ENCODE measurements at regions of chr15 and their contacts with region 1.

Region 1: GRCh38 chr15:90143166-90143655 is 40.9 kb upstream of the IDH2 start:
- DNase-seq: peak; percentile 74
- ATAC-seq: peak; percentile 95
- H3K4me3 ChIP-seq: no peak overlapping the region
- H3K4me3 Mint-ChIP-seq: no peak overlapping the region
- H3K27ac ChIP-seq: no peak overlapping the region
- H3K27ac Mint-ChIP-seq: no peak overlapping the region
- H3K4me1 ChIP-seq: peaks cover 0 to 6% of the 10 kb centered on the region in 2 donors
- H3K4me1 Mint-ChIP-seq: peaks cover 3% of the 10 kb centered on the region
- H3K27me3 ChIP-seq: no peaks in the 10 kb centered on the region
- H3K27me3 Mint-ChIP-seq: peaks cover 8% of the 10 kb centered on the region
- CTCF ChIP-seq: peak; percentile 84

Region 2: GRCh38 chr15:89971592-89971997 is 171.6 kb before region 1 on chr15:
- CTCF ChIA-PET with region 1: no interaction called
- POLR2A ChIA-PET with region 1: no interaction called
- intact Hi-C with region 1: no loop called
- DNase-seq: peak; percentile 43
- ATAC-seq: peak; percentile 61
- H3K4me3 ChIP-seq: no peak overlapping the region
- H3K4me3 Mint-ChIP-seq: no peak overlapping the region
- H3K27ac ChIP-seq: no peak overlapping the region
- H3K27ac Mint-ChIP-seq: no peak overlapping the region
- H3K4me1 ChIP-seq: peaks cover 36 to 44% of the 10 kb centered on the region in 2 donors
- H3K4me1 Mint-ChIP-seq: peaks cover 39% of the 10 kb centered on the region
- H3K27me3 ChIP-seq: no peaks in the 10 kb centered on the region
- H3K27me3 Mint-ChIP-seq: no peaks in the 10 kb centered on the region
- CTCF ChIP-seq: no peak

Region 3: DNA sequence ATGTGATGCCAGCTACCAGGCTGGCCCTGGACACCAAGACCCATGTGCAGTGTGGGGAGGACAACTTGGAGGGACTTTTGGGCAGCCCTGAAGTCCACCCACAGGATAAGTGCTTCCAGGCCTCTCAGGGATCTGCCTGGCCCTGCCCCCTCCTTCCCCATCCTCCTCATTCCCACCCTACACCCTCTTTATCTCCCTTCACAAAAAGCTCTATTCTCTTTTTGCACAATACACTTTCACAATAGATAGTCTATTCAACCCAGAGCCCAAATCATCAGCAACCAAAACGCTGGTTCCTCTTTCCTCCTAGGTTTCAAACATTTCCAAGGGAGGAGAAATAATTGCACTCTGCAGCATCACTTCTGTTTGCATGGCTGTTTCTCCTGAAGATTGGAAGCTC is 149.9 kb before region 1 on chr15:
- CTCF ChIA-PET with region 1: no interaction called
- POLR2A ChIA-PET with region 1: no interaction called
- intact Hi-C with region 1: no loop called
- DNase-seq: no peak
- ATAC-seq: no peak
- H3K4me3 ChIP-seq: no peak overlapping the region
- H3K4me3 Mint-ChIP-seq: no peak overlapping the region
- H3K27ac ChIP-seq: no peak overlapping the region
- H3K27ac Mint-ChIP-seq: no peak overlapping the region
- H3K4me1 ChIP-seq: no peaks in the 10 kb centered on the region
- H3K4me1 Mint-ChIP-seq: peaks cover 7% of the 10 kb centered on the region
- H3K27me3 ChIP-seq: no peaks in the 10 kb centered on the region
- H3K27me3 Mint-ChIP-seq: no peaks in the 10 kb centered on the region
- CTCF ChIP-seq: no peak

Region 4: GRCh38 chr15:90059208-90059985 is 83.8 kb before region 1 on chr15:
- CTCF ChIA-PET with region 1: no interaction called
- POLR2A ChIA-PET with region 1: no interaction called
- intact Hi-C with region 1: no loop called
- DNase-seq: peak; percentile 96
- ATAC-seq: peak; percentile 88
- H3K4me3 ChIP-seq: peak overlapping the region in 1 of 5 experiments; percentile 22
- H3K4me3 Mint-ChIP-seq: peak overlapping the region; percentile 80
- H3K27ac ChIP-seq: peak overlapping the region; percentile 82 to 88
- H3K27ac Mint-ChIP-seq: peak overlapping the region; percentile 98
- H3K4me1 ChIP-seq: peaks cover 54 to 93% of the 10 kb centered on the region in 2 donors
- H3K4me1 Mint-ChIP-seq: peaks cover 81% of the 10 kb centered on the region
- H3K27me3 ChIP-seq: no peaks in the 10 kb centered on the region
- H3K27me3 Mint-ChIP-seq: no peaks in the 10 kb centered on the region
- CTCF ChIP-seq: no peak

Region 5: GRCh38 chr15:90101969-90102890 is 41.0 kb before region 1 on chr15 and contains the start of gene IDH2:
- CTCF ChIA-PET with region 1: no interaction called
- POLR2A ChIA-PET with region 1: no interaction called
- intact Hi-C with region 1: loop called (anchors 1 kb)
- DNase-seq: peak; percentile 84
- ATAC-seq: peak; percentile 88
- H3K4me3 ChIP-seq: peak within 1 kb of the TSS; percentile 39 to 76 (median 73)
- H3K4me3 Mint-ChIP-seq: peak within 1 kb of the TSS; percentile 90
- H3K27ac ChIP-seq: peak within 1 kb of the TSS; percentile 53 to 81
- H3K27ac Mint-ChIP-seq: peak within 1 kb of the TSS; percentile 97
- H3K4me1 ChIP-seq: peaks cover 43 to 47% of the 10 kb centered on the region in 2 donors
- H3K4me1 Mint-ChIP-seq: peaks cover 45% of the 10 kb centered on the region
- H3K27me3 ChIP-seq: peaks cover 0 to 5% (median 1%) of the 10 kb centered on the region in 4 experiments
- H3K27me3 Mint-ChIP-seq: peaks cover 6% of the 10 kb centered on the region
- CTCF ChIP-seq: no peak
- total RNA-seq, gene IDH2: 30.7 and 33.3 TPM in 2 replicates

Region 6: GRCh38 chr15:90300988-90301706 is 157.9 kb after region 1 on chr15:
- CTCF ChIA-PET with region 1: interaction called, 22 read pairs
- POLR2A ChIA-PET with region 1: no interaction called
- intact Hi-C with region 1: no loop called
- DNase-seq: peak; percentile 73
- ATAC-seq: peak; percentile 36
- H3K4me3 ChIP-seq: no peak overlapping the region
- H3K4me3 Mint-ChIP-seq: no peak overlapping the region
- H3K27ac ChIP-seq: no peak overlapping the region
- H3K27ac Mint-ChIP-seq: no peak overlapping the region
- H3K4me1 ChIP-seq: peaks cover 3 to 5% of the 10 kb centered on the region in 2 donors
- H3K4me1 Mint-ChIP-seq: peaks cover 5% of the 10 kb centered on the region
- H3K27me3 ChIP-seq: no peaks in the 10 kb centered on the region
- H3K27me3 Mint-ChIP-seq: no peaks in the 10 kb centered on the region
- CTCF ChIP-seq: peak; percentile 80